Activated B cell treated with CpG ODN at 0.5 μM for 24 hours (primary cell): ENCODE measurements at regions of chr12 and their contacts with region 1.

Region 1: GRCh38 chr12:91355150-91356006 is 172.8 kb upstream of the DCN start:
- DNase-seq: no peak
- ATAC-seq: peak; percentile 62
- H3K4me3 Mint-ChIP-seq: no peak overlapping the region
- H3K27ac Mint-ChIP-seq: no peak overlapping the region
- H3K4me1 Mint-ChIP-seq: no peaks in the 10 kb centered on the region
- H3K27me3 Mint-ChIP-seq: peaks cover 25% of the 10 kb centered on the region
- CTCF ChIP-seq: no peak

Region 2: GRCh38 chr12:90940872-90941499 is 414.4 kb before region 1 on chr12:
- CTCF ChIA-PET with region 1: no interaction called
- POLR2A ChIA-PET with region 1: no interaction called
- intact Hi-C with region 1: loop called (anchors 1 kb)
- DNase-seq: no peak
- ATAC-seq: peak; percentile 28
- H3K4me3 Mint-ChIP-seq: no peak overlapping the region
- H3K27ac Mint-ChIP-seq: no peak overlapping the region
- H3K4me1 Mint-ChIP-seq: no peaks in the 10 kb centered on the region
- H3K27me3 Mint-ChIP-seq: peaks cover 12% of the 10 kb centered on the region
- CTCF ChIP-seq: peak; percentile 36

Region 3: DNA sequence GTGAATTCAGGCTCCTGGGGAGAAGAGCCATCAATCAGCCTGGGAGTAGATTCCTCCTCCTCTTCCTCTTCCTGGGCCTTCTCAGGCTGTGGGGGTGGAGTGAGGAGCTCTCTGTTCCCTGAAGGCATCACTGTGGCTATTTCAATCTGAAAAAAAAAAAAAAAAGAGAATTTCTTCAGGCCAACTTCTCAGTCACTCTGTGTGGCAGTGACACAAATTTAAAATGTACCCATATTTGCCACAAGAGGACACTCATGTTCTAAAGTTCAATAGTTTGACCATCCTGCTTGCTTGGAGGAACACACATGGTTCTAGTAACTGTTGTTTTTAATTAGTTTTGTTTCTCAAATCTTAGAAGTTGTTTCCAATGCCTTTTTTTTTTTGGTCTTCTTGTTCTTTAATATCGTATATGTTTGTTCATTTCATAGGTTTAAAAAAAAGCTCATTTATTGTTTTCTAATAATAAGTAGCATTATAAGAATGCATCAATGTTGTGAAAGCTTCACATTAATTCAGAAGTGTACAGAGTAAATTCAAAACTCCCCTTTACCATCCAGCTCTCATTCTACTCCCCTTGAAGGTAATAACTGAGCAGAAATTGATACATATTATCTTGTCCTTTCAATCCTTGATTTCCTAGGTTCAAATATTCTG is 377.1 kb before region 1 on chr12:
- CTCF ChIA-PET with region 1: no interaction called
- POLR2A ChIA-PET with region 1: no interaction called
- intact Hi-C with region 1: loop called (anchors 1 kb)
- DNase-seq: no peak
- ATAC-seq: no peak
- H3K4me3 Mint-ChIP-seq: no peak overlapping the region
- H3K27ac Mint-ChIP-seq: no peak overlapping the region
- H3K4me1 Mint-ChIP-seq: no peaks in the 10 kb centered on the region
- H3K27me3 Mint-ChIP-seq: peaks cover 8% of the 10 kb centered on the region
- CTCF ChIP-seq: no peak

Region 4: DNA sequence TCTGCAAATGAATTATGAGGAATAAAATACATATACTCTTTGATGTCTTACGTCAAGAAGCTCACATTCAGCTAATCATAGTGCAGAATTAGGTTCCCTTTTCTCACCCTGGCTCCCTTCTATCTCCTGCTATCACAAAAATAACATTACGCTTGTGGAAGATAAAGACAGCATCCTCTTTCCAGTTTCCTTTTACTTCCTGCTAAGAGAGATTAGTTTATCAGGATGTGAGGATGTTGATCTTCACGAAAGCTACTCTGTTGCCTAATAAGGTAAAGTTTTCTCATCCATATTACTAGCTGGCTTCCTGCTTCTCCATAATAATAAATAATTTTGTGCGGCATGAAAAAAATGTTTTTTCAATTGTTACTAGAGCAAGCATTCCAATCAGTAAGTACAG is 44.9 kb after region 1 on chr12:
- CTCF ChIA-PET with region 1: no interaction called
- POLR2A ChIA-PET with region 1: no interaction called
- intact Hi-C with region 1: no loop called
- DNase-seq: no peak
- ATAC-seq: no peak
- H3K4me3 Mint-ChIP-seq: no peak overlapping the region
- H3K27ac Mint-ChIP-seq: no peak overlapping the region
- H3K4me1 Mint-ChIP-seq: no peaks in the 10 kb centered on the region
- H3K27me3 Mint-ChIP-seq: peaks cover 11% of the 10 kb centered on the region
- CTCF ChIP-seq: no peak

Region 5: DNA sequence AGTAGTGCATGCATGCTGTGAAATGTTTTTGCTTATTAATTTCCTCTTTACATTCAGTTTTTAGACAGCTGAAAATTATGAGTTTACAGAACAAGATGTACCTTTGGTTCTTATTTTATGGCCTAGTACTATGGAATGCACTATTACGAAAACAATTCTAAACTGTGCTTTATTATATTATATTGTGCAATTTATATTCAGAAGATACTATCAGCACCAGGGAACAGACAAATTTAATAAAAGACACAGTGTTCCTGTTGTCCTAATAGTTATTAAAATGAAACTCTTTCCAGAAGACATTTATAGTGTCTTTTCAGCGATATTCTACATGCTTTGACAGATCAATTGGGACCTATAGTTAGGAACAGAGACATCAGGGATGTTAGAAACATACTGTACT is 362.9 kb after region 1 on chr12:
- CTCF ChIA-PET with region 1: no interaction called
- POLR2A ChIA-PET with region 1: no interaction called
- intact Hi-C with region 1: no loop called
- DNase-seq: no peak
- ATAC-seq: no peak
- H3K4me3 Mint-ChIP-seq: no peak overlapping the region
- H3K27ac Mint-ChIP-seq: no peak overlapping the region
- H3K4me1 Mint-ChIP-seq: no peaks in the 10 kb centered on the region
- H3K27me3 Mint-ChIP-seq: peaks cover 2% of the 10 kb centered on the region
- CTCF ChIP-seq: no peak

Region 6: GRCh38 chr12:91902860-91903683 is 547.7 kb after region 1 on chr12:
- CTCF ChIA-PET with region 1: no interaction called
- POLR2A ChIA-PET with region 1: no interaction called
- intact Hi-C with region 1: no loop called
- DNase-seq: no peak
- ATAC-seq: no peak
- H3K4me3 Mint-ChIP-seq: no peak overlapping the region
- H3K27ac Mint-ChIP-seq: no peak overlapping the region
- H3K4me1 Mint-ChIP-seq: peaks cover 8% of the 10 kb centered on the region
- H3K27me3 Mint-ChIP-seq: peaks cover 3% of the 10 kb centered on the region
- CTCF ChIP-seq: no peak